Activated naive CD8-positive, alpha-beta T cell treated with anti-CD3 and anti-CD28 coated beads, Interleukin-2, amount 10 ng/mL, durations not matched to agents 7 days and 5 days (primary cell): ENCODE measurements at regions of chr12 and their contacts with region 1.

Region 1: GRCh38 chr12:27018071-27018470 is 3.9 kb upstream of the TM7SF3 start:
- DNase-seq: no peak
- ATAC-seq: no peak
- H3K4me3 Mint-ChIP-seq: no peak overlapping the region
- H3K27ac Mint-ChIP-seq: no peak overlapping the region
- H3K4me1 Mint-ChIP-seq: peaks cover 22% of the 10 kb centered on the region
- H3K27me3 Mint-ChIP-seq: peaks cover 2% of the 10 kb centered on the region

Region 2: DNA sequence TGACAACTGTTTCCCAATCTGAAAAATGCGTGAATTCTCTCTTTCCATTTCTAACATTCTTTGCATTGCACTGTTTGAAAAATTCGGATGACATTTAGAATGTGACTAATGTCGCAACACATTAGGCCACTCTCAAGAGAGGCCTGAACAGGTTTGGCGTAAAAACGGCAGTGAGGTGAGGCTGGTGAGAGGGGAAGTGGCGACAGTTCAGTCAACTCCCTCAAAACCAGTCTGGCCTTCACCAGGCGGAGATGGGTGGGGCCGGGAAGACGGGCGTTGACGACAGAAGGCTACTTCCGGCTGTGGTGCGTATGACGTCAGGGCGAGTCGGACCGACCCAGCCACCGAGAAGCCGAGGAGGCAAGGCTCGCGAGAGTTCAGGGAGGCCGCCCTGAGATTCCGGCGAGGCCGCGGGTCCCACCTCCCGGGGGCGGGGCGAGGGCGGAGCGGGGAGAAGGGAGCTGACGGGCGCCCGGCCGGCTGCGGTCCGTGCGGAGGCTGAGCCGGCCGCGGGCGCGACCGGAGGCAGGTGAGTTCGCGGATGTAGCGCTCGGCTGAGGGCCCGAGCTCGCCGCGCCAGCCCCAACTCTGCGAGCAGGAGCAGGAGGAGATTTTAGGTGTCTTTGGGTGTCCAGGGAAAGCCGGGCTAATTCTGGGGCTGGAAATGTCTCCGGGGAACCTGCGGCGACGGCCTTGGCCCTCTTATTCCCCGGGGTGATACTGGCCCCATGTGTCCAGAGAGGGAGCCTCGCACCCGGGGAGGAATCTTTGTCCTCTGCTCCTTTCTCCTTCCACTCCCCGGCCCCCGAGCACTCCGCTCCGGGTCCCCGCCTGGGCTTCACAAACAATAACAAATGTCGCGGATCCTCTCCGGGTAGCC is 226.0 kb after region 1 on chr12 and contains the start of gene STK38L:
- POLR2A ChIA-PET with region 1: interaction called, 14 read pairs
- DNase-seq: peak; percentile 99
- ATAC-seq: peak; percentile 96
- H3K4me3 Mint-ChIP-seq: peak within 1 kb of the TSS; percentile 100
- H3K27ac Mint-ChIP-seq: peak within 1 kb of the TSS; percentile 100
- H3K4me1 Mint-ChIP-seq: peaks cover 35% of the 10 kb centered on the region
- H3K27me3 Mint-ChIP-seq: no peaks in the 10 kb centered on the region
- total RNA-seq, gene STK38L: 22.0 to 22.3 TPM

Region 3: DNA sequence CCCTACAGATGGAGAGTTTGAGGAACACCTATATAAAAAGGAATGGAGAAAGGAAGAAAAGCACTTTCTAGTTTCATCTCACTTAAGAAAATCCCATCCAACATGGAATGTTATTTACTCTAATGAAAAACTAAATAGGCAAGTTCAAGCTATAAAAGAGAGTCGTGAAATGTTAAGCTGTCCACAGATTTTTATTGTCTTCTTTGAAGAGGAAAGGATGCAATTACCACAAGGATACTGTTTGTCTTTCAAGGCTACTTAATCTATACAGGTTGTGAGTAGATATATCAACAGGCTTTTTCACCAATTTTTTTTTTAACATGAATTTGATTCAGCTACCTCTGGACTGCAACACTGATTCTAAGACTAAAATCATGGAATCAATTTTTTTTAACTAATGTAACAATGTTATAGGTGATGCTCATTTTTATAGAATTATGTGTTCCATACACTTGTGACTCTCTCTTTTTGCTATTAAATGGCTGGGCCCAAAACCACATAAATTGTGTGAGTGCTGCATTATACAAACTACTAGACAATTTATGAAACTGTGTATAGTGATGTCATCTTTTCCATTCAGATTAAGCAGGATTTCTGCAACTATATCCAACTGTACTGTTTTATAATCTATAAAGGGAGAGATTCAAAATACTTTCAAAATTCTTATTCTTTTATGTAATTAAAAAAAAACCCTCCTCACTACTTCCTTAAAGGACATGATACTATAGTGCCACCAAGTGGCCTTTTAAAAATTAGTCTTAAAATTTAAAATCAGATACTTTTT is 287.8 kb after region 1 on chr12:
- POLR2A ChIA-PET with region 1: interaction called, 12 read pairs
- DNase-seq: no peak
- ATAC-seq: no peak
- H3K4me3 Mint-ChIP-seq: no peak overlapping the region
- H3K27ac Mint-ChIP-seq: no peak overlapping the region
- H3K4me1 Mint-ChIP-seq: peaks cover 16% of the 10 kb centered on the region
- H3K27me3 Mint-ChIP-seq: no peaks in the 10 kb centered on the region